ENCODE measurements at regions of chr1 and their contacts with region 1.

Region 1: DNA sequence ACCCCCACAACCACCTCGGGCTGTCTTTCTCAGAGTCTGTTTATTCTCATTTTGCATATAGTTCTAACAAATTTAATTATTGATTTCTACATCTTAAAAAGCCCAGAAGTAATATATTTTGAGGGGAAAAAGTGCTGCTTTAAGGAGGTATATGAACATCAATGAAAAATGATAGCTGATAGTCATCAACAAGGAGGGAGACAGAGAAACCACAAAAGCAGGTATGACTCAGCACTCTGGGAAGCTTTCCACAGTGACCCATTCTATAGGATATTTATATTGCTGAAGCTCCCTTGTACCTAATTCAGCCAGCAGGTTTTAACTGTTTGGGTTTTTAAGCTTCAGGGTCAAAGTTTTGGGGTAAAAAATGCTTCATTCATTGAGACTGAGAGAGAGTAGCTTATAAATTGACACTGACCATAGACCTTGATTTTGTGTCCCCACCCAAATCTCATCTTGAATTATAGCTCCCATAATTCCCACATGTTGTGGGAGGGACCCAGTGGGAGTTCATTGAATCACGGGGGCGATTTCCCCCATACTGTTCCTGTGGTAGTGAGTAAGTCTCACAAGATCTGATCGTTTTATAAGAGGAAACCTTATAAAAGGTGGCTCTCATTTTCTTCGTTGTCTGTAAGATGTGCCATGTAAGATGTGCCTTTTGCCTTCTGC is 27.4 kb downstream of the VANGL1 start:
- DNase-seq: peak; percentile 50
- H3K4me3 ChIP-seq: no peak overlapping the region
- H3K27ac ChIP-seq: peak overlapping the region; percentile 38
- H3K4me1 ChIP-seq: peaks cover 9% of the 10 kb centered on the region
- H3K27me3 ChIP-seq: no peaks in the 10 kb centered on the region
- CTCF ChIP-seq: no peak
- POLR2A ChIP-seq: no peak

Region 2: DNA sequence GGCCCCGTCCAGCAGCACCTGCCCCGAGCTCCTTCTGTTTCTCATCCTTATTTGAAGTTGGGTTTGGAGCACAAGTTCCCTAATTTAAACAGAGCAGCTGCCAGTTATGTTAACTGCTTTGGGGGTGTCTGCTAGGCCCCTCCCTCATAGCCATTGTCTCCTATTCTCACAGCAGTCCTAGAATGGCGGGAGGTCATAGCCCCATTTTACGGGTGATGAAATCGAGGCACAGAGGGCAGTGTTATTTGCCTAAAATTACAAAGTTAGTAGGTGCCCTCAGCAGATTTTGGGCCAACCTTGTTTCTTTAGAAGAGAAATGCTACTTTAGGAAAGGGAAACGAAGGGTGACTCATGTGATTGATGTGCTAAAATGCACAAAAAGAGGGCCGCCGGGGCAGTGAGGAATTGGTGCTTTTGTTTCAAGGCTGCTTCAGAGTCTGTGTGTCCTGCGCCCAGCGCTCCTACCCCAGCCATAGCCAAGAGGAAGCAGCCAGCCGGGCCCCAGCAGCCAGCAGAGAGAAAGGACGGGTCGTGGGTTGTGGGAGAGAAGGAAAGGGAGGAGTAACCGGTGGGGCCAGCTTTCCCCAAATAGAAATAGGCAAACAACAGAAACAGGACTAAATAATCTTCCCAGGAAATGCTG is 14.4 kb before region 1 on chr1:
- CTCF ChIA-PET with region 1: interaction called, 3 read pairs
- POLR2A ChIA-PET with region 1: no interaction called
- dilution Hi-C with region 1: no loop called
- intact Hi-C with region 1: loop called (anchors 2 kb)
- DNase-seq: peak; percentile 72
- H3K4me3 ChIP-seq: no peak overlapping the region
- H3K27ac ChIP-seq: peak overlapping the region; percentile 38
- H3K4me1 ChIP-seq: peaks cover 19% of the 10 kb centered on the region
- H3K27me3 ChIP-seq: no peaks in the 10 kb centered on the region
- CTCF ChIP-seq: no peak
- POLR2A ChIP-seq: no peak